Activated naive CD4-positive, alpha-beta T cell treated with anti-CD3 and anti-CD28 coated beads for 36 hours (primary cell): ENCODE measurements at regions of chr15 and their contacts with region 1.

Region 1: DNA sequence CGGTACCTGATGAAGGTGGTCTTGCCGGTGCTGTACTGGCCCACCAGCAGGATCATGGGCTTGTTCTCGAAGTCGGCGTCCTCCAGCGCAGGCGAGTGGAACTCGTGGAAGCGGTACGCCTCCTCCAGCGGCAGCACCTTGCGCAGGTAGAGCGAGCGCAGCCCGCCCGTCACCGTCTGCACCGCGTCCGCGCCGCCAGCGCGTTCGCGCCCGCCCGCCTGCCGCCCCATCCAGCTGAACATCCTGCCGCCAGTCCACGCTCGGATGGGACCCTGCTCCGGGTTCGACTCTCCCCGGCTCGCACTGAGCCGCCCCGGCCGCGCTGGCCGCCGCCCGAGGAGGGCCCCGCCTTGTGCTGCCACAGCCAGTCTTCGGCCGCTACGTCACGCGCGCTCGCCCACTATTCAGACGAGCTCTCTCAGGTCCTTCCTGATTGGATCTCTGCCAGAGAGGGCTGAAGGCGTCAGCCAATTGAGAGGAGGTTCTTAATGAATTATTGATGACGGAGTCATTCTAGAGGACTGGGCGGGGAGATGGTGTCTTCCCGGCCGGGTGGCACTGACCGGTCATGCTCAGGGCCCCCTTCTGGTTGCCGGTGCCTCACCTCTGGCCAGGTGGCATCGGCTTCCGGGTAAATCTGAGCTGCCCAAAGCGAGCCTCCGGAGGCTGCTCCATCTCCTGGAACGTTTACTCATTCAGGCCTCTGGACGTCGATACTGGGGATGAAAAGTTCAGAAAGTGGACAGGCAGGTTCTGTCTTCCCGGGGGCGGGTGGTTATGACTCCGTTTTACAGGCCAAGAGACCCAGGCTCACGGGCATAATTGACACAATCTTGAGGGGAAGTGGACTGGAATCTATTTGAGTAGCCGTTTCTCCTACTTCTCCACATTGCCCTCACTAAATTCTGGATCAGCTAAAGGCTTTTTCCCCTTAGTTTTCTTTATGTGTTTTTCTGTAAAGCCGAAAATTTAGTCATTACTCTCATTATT is at the start of gene EHD4:
- DNase-seq: peak; percentile 97
- H3K4me3 Mint-ChIP-seq: peak within 1 kb of the TSS; percentile 88
- H3K27ac Mint-ChIP-seq: peak within 1 kb of the TSS; percentile 93
- H3K4me1 Mint-ChIP-seq: peaks cover 42% of the 10 kb centered on the region
- H3K27me3 Mint-ChIP-seq: peaks cover 8% of the 10 kb centered on the region
- total RNA-seq, gene EHD4: 30.1 to 31.8 TPM

Region 2: GRCh38 chr15:40952901-40953712 is 1019.4 kb before region 1 on chr15 and contains the start of gene CHAC1:
- CTCF ChIA-PET with region 1: no interaction called
- intact Hi-C with region 1: loop called (anchors 5 kb)
- DNase-seq: peak; percentile 99
- H3K4me3 Mint-ChIP-seq: peak within 1 kb of the TSS; percentile 94
- H3K27ac Mint-ChIP-seq: peak within 1 kb of the TSS; percentile 93
- H3K4me1 Mint-ChIP-seq: peaks cover 35% of the 10 kb centered on the region
- H3K27me3 Mint-ChIP-seq: no peaks in the 10 kb centered on the region
- total RNA-seq, gene CHAC1: 19.8 to 20.2 TPM

Region 3: DNA sequence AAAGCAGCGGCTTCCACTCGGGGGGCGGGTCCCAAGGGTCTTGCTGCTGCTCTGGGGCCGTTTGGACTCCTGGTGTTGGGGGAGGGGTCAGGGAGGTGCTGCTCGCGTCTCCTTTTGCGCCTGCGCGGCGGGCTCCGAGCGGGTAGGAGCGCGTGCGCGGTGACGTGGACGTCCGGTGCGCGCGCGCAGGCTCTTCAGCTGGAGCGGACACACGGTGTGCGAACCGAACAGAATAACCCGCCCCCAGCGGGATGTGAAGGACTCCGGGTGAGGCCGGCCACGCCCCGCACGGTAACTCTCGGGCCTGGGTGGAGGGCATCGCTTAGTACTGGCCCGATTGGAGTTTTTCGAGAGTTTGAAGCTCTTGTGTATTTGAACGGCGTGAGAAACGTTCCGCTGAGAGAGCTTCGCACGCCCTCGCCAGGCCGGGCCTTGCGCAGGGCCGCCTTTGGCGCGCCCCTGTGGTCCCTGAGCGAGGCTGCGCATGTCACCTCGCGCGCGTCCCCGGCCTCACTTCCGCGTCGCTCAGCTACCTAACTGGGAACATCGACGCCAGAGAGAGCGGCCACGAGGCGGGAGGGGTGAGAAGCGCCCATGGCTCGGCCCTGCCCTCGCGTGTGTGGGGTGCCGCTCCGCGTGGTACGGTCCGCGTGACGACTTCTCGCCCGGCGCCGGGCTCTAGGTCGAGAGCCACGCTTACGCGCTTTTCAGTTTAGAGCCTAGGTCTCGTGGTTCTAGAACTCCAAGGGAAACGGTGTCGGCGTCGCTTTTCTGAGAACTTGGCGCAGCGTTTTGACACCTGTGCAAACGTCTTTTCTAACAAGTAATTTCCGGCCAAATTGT is 312.1 kb before region 1 on chr15 and contains the start of gene MGA:
- CTCF ChIA-PET with region 1: no interaction called
- intact Hi-C with region 1: loop called (anchors 1 kb)
- DNase-seq: peak; percentile 84
- H3K4me3 Mint-ChIP-seq: peak within 1 kb of the TSS; percentile 95
- H3K27ac Mint-ChIP-seq: peak within 1 kb of the TSS; percentile 81
- H3K4me1 Mint-ChIP-seq: peaks cover 32% of the 10 kb centered on the region
- H3K27me3 Mint-ChIP-seq: peaks cover 2% of the 10 kb centered on the region
- total RNA-seq, gene MGA: 27.4 to 28.3 TPM

Region 4: GRCh38 chr15:41790756-41791546 is 181.6 kb before region 1 on chr15:
- CTCF ChIA-PET with region 1: no interaction called
- intact Hi-C with region 1: no loop called
- DNase-seq: no peak
- H3K4me3 Mint-ChIP-seq: no peak overlapping the region
- H3K27ac Mint-ChIP-seq: no peak overlapping the region
- H3K4me1 Mint-ChIP-seq: peaks cover 39% of the 10 kb centered on the region
- H3K27me3 Mint-ChIP-seq: no peaks in the 10 kb centered on the region

Region 5: GRCh38 chr15:41936649-41937567 is 35.6 kb before region 1 on chr15:
- CTCF ChIA-PET with region 1: interaction called, 24 read pairs
- intact Hi-C with region 1: loop called (anchors 1 kb)
- DNase-seq: peak; percentile 95
- H3K4me3 Mint-ChIP-seq: peak overlapping the region; percentile 68
- H3K27ac Mint-ChIP-seq: peak overlapping the region; percentile 100
- H3K4me1 Mint-ChIP-seq: peaks cover 71% of the 10 kb centered on the region
- H3K27me3 Mint-ChIP-seq: no peaks in the 10 kb centered on the region

Region 6: DNA sequence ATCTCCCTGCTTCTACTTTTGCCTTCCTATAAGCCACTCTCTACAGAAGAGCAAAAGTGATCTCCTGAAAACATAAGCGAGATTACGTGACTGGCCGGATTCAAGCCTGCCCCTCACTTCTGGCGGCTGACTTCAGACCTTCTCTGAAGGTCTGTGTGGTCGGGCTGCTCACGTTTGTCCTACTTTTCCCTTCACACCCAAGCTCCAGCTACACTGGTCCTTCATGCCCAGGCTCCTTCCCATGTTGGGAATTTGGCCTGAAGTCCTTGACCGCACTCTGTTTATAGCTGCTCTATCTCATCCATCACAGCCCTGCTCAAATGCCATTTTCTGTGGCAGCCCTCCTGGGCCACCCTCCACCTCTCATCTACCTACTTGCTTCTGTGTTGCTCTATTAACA is 55.0 kb after region 1 on chr15:
- CTCF ChIA-PET with region 1: no interaction called
- intact Hi-C with region 1: no loop called
- DNase-seq: no peak
- H3K4me3 Mint-ChIP-seq: no peak overlapping the region
- H3K27ac Mint-ChIP-seq: no peak overlapping the region
- H3K4me1 Mint-ChIP-seq: peaks cover 1% of the 10 kb centered on the region
- H3K27me3 Mint-ChIP-seq: peaks cover 2% of the 10 kb centered on the region

Region 7: DNA sequence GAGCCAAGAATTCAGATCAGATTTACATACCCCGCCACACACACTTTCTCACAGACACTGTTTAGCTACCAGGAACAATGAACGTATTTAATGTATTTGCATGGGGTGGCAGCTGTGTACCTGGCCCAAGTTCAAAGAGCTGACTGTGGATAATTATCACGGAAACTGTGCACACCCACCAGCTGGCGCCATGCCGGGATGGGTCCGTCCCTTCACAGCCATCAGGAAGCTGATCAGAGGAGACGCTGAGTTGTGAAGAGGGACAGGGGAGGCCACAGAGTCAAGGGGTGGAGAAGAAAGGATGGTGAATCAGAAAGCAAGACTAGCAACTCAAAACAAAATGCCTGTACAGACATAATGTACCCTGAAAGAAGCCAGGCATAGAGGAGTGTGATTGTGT is 134.9 kb after region 1 on chr15:
- CTCF ChIA-PET with region 1: no interaction called
- intact Hi-C with region 1: loop called (anchors 1 kb)
- DNase-seq: peak; percentile 89
- H3K4me3 Mint-ChIP-seq: no peak overlapping the region
- H3K27ac Mint-ChIP-seq: peak overlapping the region; percentile 22
- H3K4me1 Mint-ChIP-seq: peaks cover 22% of the 10 kb centered on the region
- H3K27me3 Mint-ChIP-seq: peaks cover 16% of the 10 kb centered on the region

Region 8: GRCh38 chr15:42165106-42165505 is 192.6 kb after region 1 on chr15:
- CTCF ChIA-PET with region 1: no interaction called
- intact Hi-C with region 1: no loop called
- DNase-seq: no peak
- H3K4me3 Mint-ChIP-seq: no peak overlapping the region
- H3K27ac Mint-ChIP-seq: no peak overlapping the region
- H3K4me1 Mint-ChIP-seq: no peaks in the 10 kb centered on the region
- H3K27me3 Mint-ChIP-seq: no peaks in the 10 kb centered on the region

Region 9: GRCh38 chr15:42495361-42496212 is 523.0 kb after region 1 on chr15 and contains the start of gene SNAP23:
- CTCF ChIA-PET with region 1: no interaction called
- intact Hi-C with region 1: loop called (anchors 5 kb)
- DNase-seq: peak; percentile 87
- H3K4me3 Mint-ChIP-seq: peak within 1 kb of the TSS; percentile 99
- H3K27ac Mint-ChIP-seq: peak within 1 kb of the TSS; percentile 94
- H3K4me1 Mint-ChIP-seq: peaks cover 65% of the 10 kb centered on the region
- H3K27me3 Mint-ChIP-seq: no peaks in the 10 kb centered on the region
- total RNA-seq, gene SNAP23: 33.1 to 34.5 TPM